Posterior vena cava (tissue), 2 donors: ENCODE measurements at regions of chr7 and their contacts with region 1.

Region 1: GRCh38 chr7:11416641-11417458 is 415.1 kb downstream of the THSD7A start:
- DNase-seq: no peak

Region 2: GRCh38 chr7:11281953-11282352 is 134.9 kb before region 1 on chr7:
- intact Hi-C with region 1: loop called in 1 of 2 experiments (anchors 10 kb)
- DNase-seq: no peak